GM10248 (cell line): ENCODE measurements at regions of chr10 and their contacts with region 1.

Region 1: GRCh38 chr10:92880233-92880861 is 32.0 kb downstream of the EXOC6 start:
- DNase-seq: no peak
- CTCF ChIP-seq: peak; percentile 37

Region 2: DNA sequence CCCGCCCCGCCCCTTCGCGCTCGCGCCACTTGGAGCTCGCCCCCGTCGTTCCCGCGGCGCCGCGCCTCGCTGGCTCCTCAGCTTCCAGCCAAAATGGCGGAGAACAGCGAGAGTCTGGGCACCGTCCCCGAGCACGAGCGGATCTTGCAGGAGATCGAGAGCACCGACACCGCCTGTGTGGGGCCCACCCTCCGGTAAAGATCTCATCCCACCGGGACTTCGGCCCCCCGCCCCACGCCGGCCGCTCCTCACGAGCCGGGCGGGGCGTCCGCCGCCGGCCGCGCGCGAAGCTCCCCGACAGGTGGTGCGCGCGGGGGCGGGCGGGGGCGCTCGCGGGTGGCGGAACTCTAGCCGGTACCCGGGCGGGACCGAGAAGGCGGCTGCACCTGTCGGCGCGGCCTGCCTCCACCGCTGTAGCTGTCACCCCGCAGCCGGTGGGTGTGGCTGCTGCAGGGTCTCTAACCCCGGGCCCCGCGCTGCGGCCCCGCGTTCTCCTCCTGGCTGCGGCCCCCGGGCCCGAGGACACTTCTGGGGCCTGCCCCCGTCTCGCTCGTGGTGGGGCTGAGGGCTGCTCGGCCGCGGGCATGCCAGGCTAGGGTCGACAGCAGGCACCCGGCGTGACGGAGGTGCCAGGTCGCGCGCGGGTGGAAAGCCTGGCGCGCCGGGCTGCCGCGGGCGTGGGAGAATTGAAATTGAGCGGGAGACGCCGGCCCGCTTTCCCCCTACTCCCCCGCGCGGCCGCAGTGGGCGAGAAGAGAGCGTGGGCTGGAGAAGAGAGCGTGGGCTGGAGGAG is 31.7 kb before region 1 on chr10 and contains the start of gene EXOC6:
- CTCF ChIA-PET with region 1: interaction called, 16 read pairs
- POLR2A ChIA-PET with region 1: no interaction called
- DNase-seq: peak; percentile 91
- CTCF ChIP-seq: peak; percentile 6